Activated CD8-positive, alpha-beta T cell treated with anti-CD3 and anti-CD28 coated beads for 36 hours (primary cell): ENCODE measurements at regions of chr17 and their contacts with region 1.

Region 1: GRCh38 chr17:31266042-31266441 is 31.0 kb downstream of the OMG start:
- DNase-seq: no peak
- ATAC-seq: no peak
- H3K4me3 Mint-ChIP-seq: no peak overlapping the region
- H3K27ac Mint-ChIP-seq: no peak overlapping the region
- H3K4me1 Mint-ChIP-seq: no peaks in the 10 kb centered on the region
- H3K27me3 Mint-ChIP-seq: no peaks in the 10 kb centered on the region
- CTCF ChIP-seq: no peak

Region 2: GRCh38 chr17:31251105-31251969 is 14.7 kb before region 1 on chr17:
- CTCF ChIA-PET with region 1: interaction called, 13 read pairs
- POLR2A ChIA-PET with region 1: no interaction called
- intact Hi-C with region 1: no loop called
- DNase-seq: no peak
- ATAC-seq: no peak
- H3K4me3 Mint-ChIP-seq: no peak overlapping the region
- H3K27ac Mint-ChIP-seq: no peak overlapping the region
- H3K4me1 Mint-ChIP-seq: peaks cover 4% of the 10 kb centered on the region
- H3K27me3 Mint-ChIP-seq: no peaks in the 10 kb centered on the region
- CTCF ChIP-seq: no peak

Region 3: DNA sequence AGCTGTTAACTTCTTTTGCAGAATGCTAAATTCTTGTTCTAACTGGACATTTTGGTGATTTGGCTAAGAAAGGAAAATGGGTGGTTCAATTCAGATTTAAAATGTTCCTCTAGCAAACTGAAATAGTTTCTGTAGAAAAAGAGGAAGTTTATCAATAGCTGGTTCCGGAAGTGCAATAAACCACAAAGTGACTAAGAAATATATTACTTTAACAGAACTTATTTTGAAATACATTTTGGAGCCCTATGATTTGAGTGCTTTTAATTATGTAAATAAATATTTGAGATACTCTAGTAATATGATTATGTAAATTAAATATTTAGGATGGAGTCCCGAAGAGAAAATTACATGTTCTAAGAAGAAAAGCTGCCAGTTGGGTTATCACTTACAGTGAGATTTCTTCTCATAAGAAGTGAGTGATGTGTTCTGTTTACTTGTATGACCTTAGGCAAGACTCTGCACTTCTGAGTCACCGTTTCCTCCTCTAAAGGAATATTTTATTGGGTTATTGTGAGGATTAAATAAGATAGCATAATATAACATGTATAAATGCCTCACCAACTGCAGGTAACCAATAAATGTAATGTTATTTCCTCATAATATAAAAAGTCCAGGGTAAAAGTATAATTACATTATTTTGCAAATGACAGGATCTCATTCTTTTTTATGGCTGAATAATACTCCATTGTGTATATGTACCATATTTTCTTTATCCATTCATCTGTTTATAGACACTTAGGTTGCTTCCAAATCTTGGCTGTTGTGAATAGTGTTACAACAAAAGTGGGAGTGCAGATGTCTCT is 48.1 kb after region 1 on chr17 and contains the start of gene EVI2B:
- CTCF ChIA-PET with region 1: no interaction called
- POLR2A ChIA-PET with region 1: no interaction called
- intact Hi-C with region 1: no loop called
- DNase-seq: peak; percentile 22
- ATAC-seq: peak; percentile 44
- H3K4me3 Mint-ChIP-seq: peak within 1 kb of the TSS; percentile 90
- H3K27ac Mint-ChIP-seq: peak within 1 kb of the TSS; percentile 96
- H3K4me1 Mint-ChIP-seq: peaks cover 34% of the 10 kb centered on the region
- H3K27me3 Mint-ChIP-seq: no peaks in the 10 kb centered on the region
- CTCF ChIP-seq: no peak
- total RNA-seq, gene EVI2B: 15.0 to 16.4 TPM